ENCODE measurements at regions of chr2 and their contacts with region 1.

Region 1: DNA sequence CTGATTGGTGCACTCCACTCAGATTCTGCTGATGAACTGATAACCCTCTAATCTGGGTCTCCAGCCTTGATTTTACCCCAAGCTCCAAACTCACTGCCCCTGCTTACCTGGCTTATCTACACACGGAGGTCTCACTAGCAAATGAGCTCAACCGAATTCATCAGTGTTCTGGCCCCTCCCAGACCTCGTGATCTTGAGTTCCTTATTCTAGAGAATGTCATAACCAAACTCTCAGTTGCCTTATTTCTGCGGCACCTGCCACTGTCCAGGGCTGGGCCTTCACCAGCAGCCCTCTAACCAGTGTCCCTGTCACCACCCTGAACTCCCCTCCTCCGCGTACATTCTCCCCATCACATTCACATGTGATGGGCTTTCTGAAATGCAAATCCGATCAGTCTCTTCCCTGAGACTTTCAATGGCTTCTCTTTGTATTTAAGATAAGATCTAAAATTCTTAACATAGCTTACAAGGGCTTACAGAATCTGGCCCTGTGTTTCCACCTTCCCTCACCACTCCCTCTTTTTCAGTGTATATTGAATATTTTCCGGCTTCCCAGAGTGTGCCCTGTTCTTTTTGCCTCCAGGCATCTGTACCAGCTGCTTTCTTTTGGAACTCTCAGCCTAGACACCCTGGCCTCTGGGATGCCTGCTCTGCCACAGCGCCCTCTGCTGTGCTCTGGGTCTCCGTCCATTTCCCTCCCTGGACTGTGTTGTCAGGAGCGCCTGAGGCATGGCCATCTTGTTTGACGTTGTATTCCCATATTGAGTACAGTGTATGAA is 31.1 kb downstream of the NAB1 start:
- DNase-seq: peak; percentile 63 to 79
- H3K4me3 ChIP-seq: peak overlapping the region in 1 of 4 experiments; percentile 14; a peak in 1 of 8 replicates
- H3K27ac ChIP-seq: no peak overlapping the region
- H3K4me1 ChIP-seq: peaks cover 3 to 12% (median 8%) of the 10 kb centered on the region in 4 experiments; a peak in 5 of 7 replicates
- H3K27me3 ChIP-seq: no peaks in the 10 kb centered on the region
- CTCF ChIP-seq: peak; percentile 82 to 97 (median 95)
- EP300 ChIP-seq: no peak
- POLR2A ChIP-seq: no peak
- RAD21 ChIP-seq: peak; percentile 79 to 82

Region 2: DNA sequence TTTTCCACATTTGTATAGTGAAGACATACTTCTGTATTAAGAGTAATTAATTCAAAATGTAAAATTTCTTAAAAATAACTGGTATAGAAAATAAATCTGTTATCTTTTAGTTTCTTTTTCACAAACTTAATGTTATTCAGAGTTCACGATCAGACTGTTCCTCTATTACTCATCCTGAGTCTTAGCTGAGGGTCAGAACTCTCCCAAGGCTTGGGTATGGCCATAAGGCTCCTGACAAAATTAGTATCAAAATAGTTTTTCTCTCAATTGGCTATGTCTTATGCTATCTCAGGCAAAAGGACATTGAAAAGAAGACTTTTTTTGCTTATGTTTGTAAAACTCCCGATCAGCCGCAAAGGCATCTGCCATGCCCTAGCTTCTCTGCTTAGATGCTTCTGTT is 87.2 kb before region 1 on chr2:
- CTCF ChIA-PET with region 1: no interaction called
- POLR2A ChIA-PET with region 1: no interaction called
- DNase-seq: no peak
- H3K4me3 ChIP-seq: no peak overlapping the region
- H3K27ac ChIP-seq: no peak overlapping the region
- H3K4me1 ChIP-seq: no peaks in the 10 kb centered on the region
- H3K27me3 ChIP-seq: no peaks in the 10 kb centered on the region
- CTCF ChIP-seq: no peak
- EP300 ChIP-seq: no peak
- POLR2A ChIP-seq: no peak
- RAD21 ChIP-seq: no peak

Region 3: GRCh38 chr2:190626641-190627210 is 53.3 kb before region 1 on chr2:
- CTCF ChIA-PET with region 1: interaction called, 11 read pairs
- POLR2A ChIA-PET with region 1: interaction called, 3 read pairs
- DNase-seq: no peak
- H3K4me3 ChIP-seq: no peak overlapping the region
- H3K27ac ChIP-seq: no peak overlapping the region
- H3K4me1 ChIP-seq: no peaks in the 10 kb centered on the region
- H3K27me3 ChIP-seq: no peaks in the 10 kb centered on the region
- CTCF ChIP-seq: no peak
- EP300 ChIP-seq: no peak
- POLR2A ChIP-seq: no peak
- RAD21 ChIP-seq: no peak

Region 4: GRCh38 chr2:190649035-190649797 is 30.8 kb before region 1 on chr2 and contains the start of gene NAB1:
- CTCF ChIA-PET with region 1: interaction called, 48 read pairs
- POLR2A ChIA-PET with region 1: interaction called, 4 read pairs
- DNase-seq: peak in 1 of 2 experiments; percentile 77
- H3K4me3 ChIP-seq: peak within 1 kb of the TSS; percentile 68 to 96 (median 78)
- H3K27ac ChIP-seq: no peak within 1 kb of the TSS
- H3K4me1 ChIP-seq: peaks cover 0 to 5% (median 1%) of the 10 kb centered on the region in 4 experiments; a peak in 2 of 7 replicates
- H3K27me3 ChIP-seq: no peaks in the 10 kb centered on the region
- CTCF ChIP-seq: no peak
- EP300 ChIP-seq: no peak
- POLR2A ChIP-seq: 0 out of 3 replicates have a peak, but pooled peaks of 1 of the 2 experiments have one; percentile 21
- RAD21 ChIP-seq: no peak
- total RNA-seq, gene NAB1: 28.2 and 28.6 TPM in 2 replicates

Region 5: GRCh38 chr2:190693533-190694232 is 13.7 kb after region 1 on chr2:
- CTCF ChIA-PET with region 1: interaction called, 42 read pairs
- POLR2A ChIA-PET with region 1: interaction called, 4 read pairs
- DNase-seq: no peak
- H3K4me3 ChIP-seq: no peak overlapping the region
- H3K27ac ChIP-seq: no peak overlapping the region
- H3K4me1 ChIP-seq: peaks cover 0 to 9% (median 6%) of the 10 kb centered on the region in 4 experiments; a peak in 6 of 7 replicates
- H3K27me3 ChIP-seq: no peaks in the 10 kb centered on the region
- CTCF ChIP-seq: no peak
- EP300 ChIP-seq: no peak
- POLR2A ChIP-seq: no peak
- RAD21 ChIP-seq: no peak

Region 6: DNA sequence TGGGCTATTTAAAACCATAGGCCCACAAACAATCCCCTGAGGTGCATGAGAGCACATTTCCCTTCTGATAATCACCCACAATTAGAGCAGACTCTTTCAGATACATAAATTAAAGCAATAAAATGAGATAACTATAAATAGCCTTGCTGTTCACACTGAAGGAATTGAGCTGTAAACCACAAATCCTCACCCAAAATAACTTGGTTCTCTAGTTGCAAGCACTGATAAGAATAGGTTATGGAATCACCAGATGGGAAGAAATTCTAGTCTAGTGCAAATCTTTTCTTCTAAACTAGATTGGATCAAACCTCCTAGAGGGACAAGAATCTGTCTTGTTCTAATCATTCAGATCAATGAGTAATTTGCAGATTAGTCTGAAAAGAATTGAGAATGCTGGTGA is 33.5 kb after region 1 on chr2:
- CTCF ChIA-PET with region 1: interaction called, 10 read pairs
- POLR2A ChIA-PET with region 1: no interaction called
- DNase-seq: no peak
- H3K4me3 ChIP-seq: no peak overlapping the region
- H3K27ac ChIP-seq: no peak overlapping the region
- H3K4me1 ChIP-seq: no peaks in the 10 kb centered on the region
- H3K27me3 ChIP-seq: no peaks in the 10 kb centered on the region
- CTCF ChIP-seq: no peak
- EP300 ChIP-seq: no peak
- POLR2A ChIP-seq: no peak
- RAD21 ChIP-seq: no peak